HepG2 (cell line): ENCODE measurements at regions of chr3 and their contacts with region 1.

Region 1: DNA sequence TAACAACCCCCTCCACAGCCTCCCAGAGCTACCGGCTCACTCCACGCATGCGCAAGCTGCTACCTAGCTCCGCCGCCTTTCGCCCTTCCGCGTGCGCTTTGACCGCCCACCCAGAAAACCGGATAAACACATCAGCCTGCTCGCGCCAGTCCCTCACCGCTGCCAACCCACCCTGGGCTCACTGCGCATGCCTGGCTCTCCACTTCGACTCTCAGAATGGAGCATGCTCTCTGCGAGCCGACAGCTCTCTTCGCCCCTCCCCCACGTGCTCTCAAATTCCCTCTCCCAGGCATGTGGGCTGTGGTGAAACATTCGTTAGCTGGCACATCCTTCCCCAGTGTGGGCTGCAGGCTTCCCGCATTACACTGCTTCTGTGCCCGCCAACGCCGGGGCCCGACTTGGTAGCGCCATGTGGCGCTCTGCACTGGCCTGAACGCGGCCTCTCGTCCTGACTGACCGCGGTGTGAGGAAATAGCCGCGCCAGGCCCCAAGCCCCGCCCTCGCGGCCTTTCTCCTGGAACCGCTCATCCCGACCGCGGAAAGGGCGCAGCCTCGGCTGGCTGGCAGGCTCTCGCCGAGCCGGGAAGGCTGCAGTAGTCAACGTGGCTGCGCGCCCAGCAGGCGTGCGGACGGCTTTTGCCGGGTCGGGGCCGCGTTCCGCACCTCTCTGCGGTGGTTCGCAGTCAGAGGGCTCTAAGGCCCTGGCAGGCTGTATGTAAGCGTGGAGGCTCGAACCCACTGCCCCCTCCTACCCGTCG is 445 bp upstream of the MSL2 start:
- DNase-seq: peak; percentile 98
- ATAC-seq: peak; percentile 84
- H3K4me3 ChIP-seq: peak overlapping the region; percentile 45 to 93 (median 80); a peak in 5 of 6 replicates
- H3K27ac ChIP-seq: peak overlapping the region; percentile 92
- H3K4me1 ChIP-seq: peaks cover 22% of the 10 kb centered on the region
- H3K27me3 ChIP-seq: no peaks in the 10 kb centered on the region
- CTCF ChIP-seq: no peak; the same call in none of the 2 replicates
- EP300 ChIP-seq: no peak
- POLR2A ChIP-seq: peak in 1 of 2 experiments; percentile 91; a peak in 2 of 4 replicates
- RAD21 ChIP-seq: 0 out of 2 replicates have a peak, but pooled peaks have one; percentile 79

Region 2: GRCh38 chr3:136186344-136186743 is 10.2 kb before region 1 on chr3:
- CTCF ChIA-PET with region 1: no interaction called
- POLR2A ChIA-PET with region 1: interaction called, 30 read pairs
- in situ Hi-C with region 1: no loop called
- intact Hi-C with region 1: no loop called
- DNase-seq: peak; percentile 69
- ATAC-seq: peak; percentile 95
- H3K4me3 ChIP-seq: no peak overlapping the region
- H3K27ac ChIP-seq: no peak overlapping the region
- H3K4me1 ChIP-seq: peaks cover 97% of the 10 kb centered on the region
- H3K27me3 ChIP-seq: no peaks in the 10 kb centered on the region
- CTCF ChIP-seq: no peak
- EP300 ChIP-seq: no peak
- POLR2A ChIP-seq: no peak
- RAD21 ChIP-seq: no peak

Region 3: GRCh38 chr3:136207489-136208115 is 11.0 kb after region 1 on chr3:
- CTCF ChIA-PET with region 1: no interaction called
- POLR2A ChIA-PET with region 1: interaction called, 10 read pairs
- in situ Hi-C with region 1: no loop called
- intact Hi-C with region 1: no loop called
- DNase-seq: no peak
- ATAC-seq: no peak
- H3K4me3 ChIP-seq: no peak overlapping the region
- H3K27ac ChIP-seq: no peak overlapping the region
- H3K4me1 ChIP-seq: peaks cover 19% of the 10 kb centered on the region
- H3K27me3 ChIP-seq: no peaks in the 10 kb centered on the region
- CTCF ChIP-seq: no peak
- EP300 ChIP-seq: no peak
- POLR2A ChIP-seq: no peak
- RAD21 ChIP-seq: no peak

Region 4: DNA sequence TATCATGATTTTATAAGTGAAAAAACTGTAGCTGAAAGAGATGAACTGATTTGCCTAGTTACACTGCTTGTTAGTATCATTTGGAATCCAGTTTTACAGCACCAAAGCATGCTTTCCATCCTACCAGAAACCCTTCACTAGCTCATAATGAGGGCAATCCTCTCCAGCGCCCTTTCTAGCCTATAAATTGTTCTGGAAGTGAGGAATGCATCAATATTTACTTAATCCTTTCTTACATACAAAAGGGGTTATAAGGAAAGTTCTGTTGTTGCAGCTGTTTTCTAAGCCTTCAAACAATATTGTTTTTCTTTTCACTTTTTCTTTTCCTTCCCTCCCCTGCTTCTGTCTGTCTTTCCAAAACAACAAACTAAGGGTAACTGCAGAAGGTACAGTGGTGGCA is 42.5 kb after region 1 on chr3:
- CTCF ChIA-PET with region 1: no interaction called
- POLR2A ChIA-PET with region 1: interaction called, 27 read pairs
- in situ Hi-C with region 1: no loop called
- intact Hi-C with region 1: no loop called
- DNase-seq: peak; percentile 10
- ATAC-seq: no peak
- H3K4me3 ChIP-seq: no peak overlapping the region
- H3K27ac ChIP-seq: no peak overlapping the region
- H3K4me1 ChIP-seq: peaks cover 55% of the 10 kb centered on the region
- H3K27me3 ChIP-seq: no peaks in the 10 kb centered on the region; a peak in 2 of 5 replicates
- CTCF ChIP-seq: no peak
- EP300 ChIP-seq: no peak
- POLR2A ChIP-seq: no peak
- RAD21 ChIP-seq: no peak

Region 5: GRCh38 chr3:136250226-136250902 is 53.8 kb after region 1 on chr3 and contains the start of gene PCCB:
- CTCF ChIA-PET with region 1: no interaction called
- POLR2A ChIA-PET with region 1: interaction called, 131 read pairs
- in situ Hi-C with region 1: loop called (anchors 5 kb)
- intact Hi-C with region 1: loop called (anchors 1 kb)
- DNase-seq: peak; percentile 93
- ATAC-seq: peak; percentile 96
- H3K4me3 ChIP-seq: peak within 1 kb of the TSS; percentile 54 to 77 (median 72)
- H3K27ac ChIP-seq: peak within 1 kb of the TSS; percentile 95
- H3K4me1 ChIP-seq: peaks cover 66% of the 10 kb centered on the region
- H3K27me3 ChIP-seq: no peaks in the 10 kb centered on the region
- CTCF ChIP-seq: peak; percentile 95
- EP300 ChIP-seq: no peak
- POLR2A ChIP-seq: peak; percentile 82 to 87
- RAD21 ChIP-seq: peak; percentile 77
- total RNA-seq, gene PCCB: 88.7 and 92.6 TPM in 2 replicates

Region 6: DNA sequence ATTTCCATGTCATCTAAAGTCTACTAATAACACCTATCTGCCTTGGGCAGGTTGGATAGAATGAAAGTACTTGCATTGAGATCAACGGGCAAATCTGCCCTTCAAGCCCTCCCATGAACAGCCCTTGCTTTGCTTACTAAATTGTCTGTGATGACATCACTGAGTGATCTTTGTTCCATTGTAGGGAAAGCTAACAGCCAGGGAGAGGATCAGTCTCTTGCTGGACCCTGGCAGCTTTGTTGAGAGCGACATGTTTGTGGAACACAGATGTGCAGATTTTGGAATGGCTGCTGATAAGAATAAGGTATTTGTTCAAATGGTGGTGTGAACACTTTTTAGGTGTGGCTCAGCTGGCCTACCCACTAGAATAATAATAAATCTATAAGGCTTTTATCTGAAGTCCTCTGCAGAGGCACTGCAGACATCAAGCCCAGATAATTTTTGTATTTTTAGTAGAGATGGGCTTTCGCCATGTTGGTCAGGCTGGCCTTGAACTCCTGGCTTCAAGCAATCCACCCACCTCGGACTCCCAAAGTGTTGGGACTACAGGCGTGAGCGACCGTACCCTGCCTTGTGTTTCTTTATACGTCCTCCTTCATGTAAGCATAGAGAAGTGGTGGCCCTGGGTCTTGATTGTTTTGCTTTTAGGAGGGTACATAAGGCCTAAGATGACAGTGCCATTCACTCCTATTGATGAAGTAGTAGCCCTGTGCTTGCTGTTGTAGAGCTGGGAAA is 59.3 kb after region 1 on chr3:
- CTCF ChIA-PET with region 1: no interaction called
- POLR2A ChIA-PET with region 1: interaction called, 131 read pairs
- in situ Hi-C with region 1: no loop called
- intact Hi-C with region 1: no loop called
- DNase-seq: peak; percentile 97
- ATAC-seq: peak; percentile 93
- H3K4me3 ChIP-seq: peak overlapping the region in 2 of 3 experiments; percentile 23 to 53; a peak in 3 of 6 replicates
- H3K27ac ChIP-seq: peak overlapping the region; percentile 89
- H3K4me1 ChIP-seq: peaks cover 40% of the 10 kb centered on the region
- H3K27me3 ChIP-seq: no peaks in the 10 kb centered on the region
- CTCF ChIP-seq: no peak
- EP300 ChIP-seq: peak in 1 of 2 experiments; percentile 48; a peak in 2 of 4 replicates
- POLR2A ChIP-seq: peak; percentile 25 to 55; a peak in 1 of 4 replicates
- RAD21 ChIP-seq: no peak